ENCODE measurements at regions of chr2 and their contacts with region 1.

Region 1: DNA sequence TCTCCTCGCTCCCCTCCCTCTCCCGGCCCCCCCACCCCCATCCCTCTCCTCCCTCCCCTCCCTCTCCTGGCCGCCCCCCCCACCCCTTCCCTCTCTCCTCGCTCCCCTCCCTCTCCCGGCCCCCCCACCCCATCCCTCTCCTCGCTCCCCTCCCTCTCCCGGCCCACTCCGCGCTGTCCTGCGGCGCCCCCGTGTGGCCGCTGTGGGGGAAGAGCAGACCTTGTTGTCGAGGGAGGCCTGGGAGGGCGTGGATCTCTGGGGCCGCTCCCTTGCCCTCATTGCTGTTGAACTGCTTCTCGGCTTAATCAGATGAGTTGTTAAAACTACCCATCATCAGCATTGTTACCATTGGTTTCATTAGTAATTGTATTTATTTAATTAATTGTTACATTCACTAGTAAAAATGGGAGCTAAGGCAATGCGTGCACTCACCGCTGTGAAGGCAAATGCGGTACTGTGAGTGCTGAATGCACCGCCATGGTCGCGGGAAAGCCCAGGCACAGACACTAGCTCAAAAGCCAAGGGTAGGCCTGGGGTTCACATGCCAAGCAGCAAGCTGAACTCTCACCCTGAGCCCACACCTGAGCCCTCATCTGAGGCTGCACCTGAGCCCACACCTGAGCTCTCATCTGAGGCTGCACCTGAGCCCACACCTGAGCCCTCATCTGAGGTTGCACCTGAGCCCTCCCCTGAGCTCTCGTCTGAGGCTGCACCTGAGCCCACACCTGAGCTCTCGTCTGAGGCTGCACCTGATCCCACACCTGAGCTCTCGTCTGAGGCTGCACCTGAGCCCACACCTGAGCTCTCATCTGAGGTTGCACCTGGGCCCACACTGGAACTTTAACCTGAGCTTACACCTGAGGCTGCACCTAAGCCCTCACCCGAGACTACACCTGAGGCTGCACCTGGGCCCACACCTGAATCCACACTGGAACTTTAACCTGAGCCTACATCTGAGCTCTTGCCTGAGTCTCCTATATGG is 8.8 kb downstream of the RTP5 start:
- DNase-seq: no peak
- H3K4me3 ChIP-seq: no peak overlapping the region
- H3K27me3 ChIP-seq: no peaks in the 10 kb centered on the region
- CTCF ChIP-seq: peak; percentile 89

Region 2: GRCh38 chr2:241659150-241659739 is 219.0 kb before region 1 on chr2:
- CTCF ChIA-PET with region 1: interaction called, 10 read pairs
- POLR2A ChIA-PET with region 1: no interaction called
- DNase-seq: no peak
- H3K4me3 ChIP-seq: no peak overlapping the region
- H3K27me3 ChIP-seq: no peaks in the 10 kb centered on the region
- CTCF ChIP-seq: peak; percentile 76

Region 3: DNA sequence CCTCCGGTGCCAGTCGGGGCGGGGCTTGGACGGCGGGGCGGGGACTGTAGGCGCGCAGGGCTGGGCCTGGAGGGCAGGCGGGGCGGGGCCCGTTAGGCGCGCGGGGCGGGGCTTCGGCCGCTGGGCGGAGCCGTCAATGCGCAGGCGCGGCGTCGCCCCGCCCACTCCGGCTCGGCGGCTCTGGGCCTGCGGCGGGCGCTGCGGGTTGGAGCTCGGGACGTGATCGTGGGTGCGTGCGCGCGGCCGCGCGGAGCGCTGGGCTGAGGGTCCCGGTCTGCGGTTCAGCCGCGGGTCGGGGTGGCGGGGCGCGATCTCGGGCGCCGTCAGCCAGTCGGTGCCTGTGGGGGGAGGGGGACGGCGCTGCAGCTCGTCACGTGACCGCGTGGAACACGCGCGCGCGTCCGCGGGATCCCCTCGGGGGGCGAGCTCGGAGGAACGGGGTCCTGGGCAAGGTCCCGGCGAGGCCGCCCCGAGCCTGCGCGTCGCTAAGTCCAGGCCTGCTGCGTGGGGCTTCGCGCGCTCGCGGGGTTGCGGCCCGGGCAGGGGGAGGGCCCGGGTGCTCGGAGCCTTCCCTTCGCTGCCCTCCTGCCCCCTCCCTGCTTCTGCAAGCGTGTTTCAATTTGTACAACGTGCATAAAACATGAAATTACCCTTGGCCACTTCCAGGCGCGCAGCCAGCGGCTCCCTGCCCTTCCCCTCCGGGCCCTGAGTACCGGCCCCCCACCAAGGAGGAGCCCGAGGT is 143.6 kb before region 1 on chr2 and contains the start of gene D2HGDH:
- CTCF ChIA-PET with region 1: interaction called, 15 read pairs
- POLR2A ChIA-PET with region 1: no interaction called
- DNase-seq: peak; percentile 11
- H3K4me3 ChIP-seq: peak within 1 kb of the TSS; percentile 82
- H3K27me3 ChIP-seq: no peaks in the 10 kb centered on the region
- CTCF ChIP-seq: no peak
- polyA plus RNA-seq, gene D2HGDH: 8.0 and 16.1 TPM in 2 replicates

Region 4: GRCh38 chr2:241803387-241804325 is 74.6 kb before region 1 on chr2:
- CTCF ChIA-PET with region 1: no interaction called
- POLR2A ChIA-PET with region 1: no interaction called
- DNase-seq: peak; percentile 1
- H3K4me3 ChIP-seq: peak overlapping the region; percentile 33
- H3K27me3 ChIP-seq: peaks cover 11% of the 10 kb centered on the region
- CTCF ChIP-seq: no peak

Region 5: GRCh38 chr2:241865957-241866789 is 12.1 kb before region 1 on chr2:
- CTCF ChIA-PET with region 1: interaction called, 15 read pairs
- POLR2A ChIA-PET with region 1: interaction called, 11 read pairs
- DNase-seq: no peak
- H3K4me3 ChIP-seq: no peak overlapping the region
- H3K27me3 ChIP-seq: peaks cover 21% of the 10 kb centered on the region
- CTCF ChIP-seq: no peak